ENCODE measurements at regions of chr7 and their contacts with region 1.

Region 1: DNA sequence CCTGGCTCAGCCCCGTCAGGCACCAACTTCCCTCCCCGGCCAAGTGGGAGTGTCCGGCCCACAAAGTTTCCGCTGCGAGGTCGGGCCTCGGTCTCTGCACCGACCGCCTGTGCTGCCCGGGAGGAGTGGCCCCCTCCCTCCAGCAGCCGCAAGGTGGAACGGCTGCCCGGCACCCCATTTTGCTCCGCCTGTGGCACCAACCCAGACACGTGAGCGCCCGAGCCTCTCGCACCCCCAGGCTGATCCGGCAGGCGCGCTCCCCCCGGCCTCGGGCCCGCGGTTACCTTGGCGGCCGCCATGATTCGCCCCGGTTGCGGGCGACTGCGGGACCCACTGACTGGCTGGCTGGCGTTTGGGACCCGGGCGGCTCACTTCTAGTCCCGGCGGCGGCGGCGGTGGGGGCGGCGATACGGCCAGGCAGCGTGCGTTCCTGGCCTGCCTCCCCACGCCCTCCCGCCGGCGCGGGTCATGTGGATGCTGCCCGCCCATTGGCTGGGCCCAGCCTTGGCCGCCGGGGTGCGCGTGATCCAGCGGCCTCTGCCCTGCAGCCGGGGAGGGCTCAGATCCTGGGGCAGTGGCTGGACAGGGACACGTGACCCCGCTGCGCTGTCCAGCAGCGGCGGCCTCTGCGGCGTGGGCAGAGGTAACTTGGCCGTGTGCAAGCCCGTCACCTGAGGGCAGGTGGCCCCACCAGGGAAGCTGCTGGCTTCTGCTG is at the start of gene SLC25A13:
- DNase-seq: peak; percentile 25 to 82 (median 48)
- ATAC-seq: peak; percentile 82
- H3K4me3 ChIP-seq: peak within 1 kb of the TSS; percentile 91
- H3K4me3 Mint-ChIP-seq: peak within 1 kb of the TSS; percentile 97
- H3K27ac ChIP-seq: peak within 1 kb of the TSS; percentile 63 to 87
- H3K27ac Mint-ChIP-seq: peak within 1 kb of the TSS; percentile 96
- H3K4me1 ChIP-seq: peaks cover 13% of the 10 kb centered on the region
- H3K4me1 Mint-ChIP-seq: peaks cover 32% of the 10 kb centered on the region
- H3K27me3 ChIP-seq: no peaks in the 10 kb centered on the region
- H3K27me3 Mint-ChIP-seq: no peaks in the 10 kb centered on the region
- CTCF ChIP-seq: no peak
- total RNA-seq, gene SLC25A13: 12.7 to 13.5 TPM

Region 2: DNA sequence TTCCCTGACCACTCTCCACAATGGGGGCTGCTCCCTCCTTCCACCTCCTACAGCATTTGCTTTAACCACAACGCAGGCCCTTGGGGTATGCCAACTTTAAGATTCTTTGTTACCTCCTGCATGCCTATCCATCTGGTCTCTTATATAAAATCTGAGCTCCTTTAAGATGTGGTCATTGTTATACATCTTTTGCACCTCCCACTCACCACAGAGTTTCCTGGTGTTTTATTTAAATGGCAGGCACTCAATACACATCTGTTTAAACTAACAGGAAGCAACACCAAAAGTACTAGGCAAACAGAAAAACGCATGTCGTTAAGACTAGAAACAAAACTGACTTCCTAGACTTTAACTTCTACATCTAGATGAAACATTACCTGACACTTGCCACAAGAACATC is 36.2 kb before region 1 on chr7:
- CTCF ChIA-PET with region 1: no interaction called
- POLR2A ChIA-PET with region 1: interaction called, 6 read pairs
- intact Hi-C with region 1: loop called in 1 of 2 experiments (anchors 5 kb)
- DNase-seq: peak in 7 of 14 experiments; percentile 9 to 89 (median 28)
- ATAC-seq: peak; percentile 95
- H3K4me3 ChIP-seq: peak overlapping the region; percentile 13
- H3K4me3 Mint-ChIP-seq: peak overlapping the region; percentile 43
- H3K27ac ChIP-seq: peak overlapping the region; percentile 26 to 77
- H3K27ac Mint-ChIP-seq: peak overlapping the region; percentile 84
- H3K4me1 ChIP-seq: peaks cover 30% of the 10 kb centered on the region
- H3K4me1 Mint-ChIP-seq: peaks cover 53% of the 10 kb centered on the region
- H3K27me3 ChIP-seq: no peaks in the 10 kb centered on the region
- H3K27me3 Mint-ChIP-seq: no peaks in the 10 kb centered on the region
- CTCF ChIP-seq: no peak

Region 3: GRCh38 chr7:96709381-96710228 is 387.8 kb after region 1 on chr7 and contains the start of gene SEM1:
- CTCF ChIA-PET with region 1: no interaction called
- POLR2A ChIA-PET with region 1: no interaction called
- intact Hi-C with region 1: loop called in 1 of 2 experiments (anchors 10 kb)
- DNase-seq: peak; percentile 36 to 82 (median 54)
- ATAC-seq: peak; percentile 75
- H3K4me3 ChIP-seq: peak within 1 kb of the TSS; percentile 97
- H3K4me3 Mint-ChIP-seq: peak within 1 kb of the TSS; percentile 97
- H3K27ac ChIP-seq: peak within 1 kb of the TSS in 1 of 2 donors; percentile 88
- H3K27ac Mint-ChIP-seq: peak within 1 kb of the TSS; percentile 91
- H3K4me1 ChIP-seq: peaks cover 9% of the 10 kb centered on the region
- H3K4me1 Mint-ChIP-seq: peaks cover 49% of the 10 kb centered on the region
- H3K27me3 ChIP-seq: no peaks in the 10 kb centered on the region
- H3K27me3 Mint-ChIP-seq: peaks cover 8% of the 10 kb centered on the region
- CTCF ChIP-seq: no peak
- total RNA-seq, gene SEM1: 17.4 to 18.2 TPM

Region 4: DNA sequence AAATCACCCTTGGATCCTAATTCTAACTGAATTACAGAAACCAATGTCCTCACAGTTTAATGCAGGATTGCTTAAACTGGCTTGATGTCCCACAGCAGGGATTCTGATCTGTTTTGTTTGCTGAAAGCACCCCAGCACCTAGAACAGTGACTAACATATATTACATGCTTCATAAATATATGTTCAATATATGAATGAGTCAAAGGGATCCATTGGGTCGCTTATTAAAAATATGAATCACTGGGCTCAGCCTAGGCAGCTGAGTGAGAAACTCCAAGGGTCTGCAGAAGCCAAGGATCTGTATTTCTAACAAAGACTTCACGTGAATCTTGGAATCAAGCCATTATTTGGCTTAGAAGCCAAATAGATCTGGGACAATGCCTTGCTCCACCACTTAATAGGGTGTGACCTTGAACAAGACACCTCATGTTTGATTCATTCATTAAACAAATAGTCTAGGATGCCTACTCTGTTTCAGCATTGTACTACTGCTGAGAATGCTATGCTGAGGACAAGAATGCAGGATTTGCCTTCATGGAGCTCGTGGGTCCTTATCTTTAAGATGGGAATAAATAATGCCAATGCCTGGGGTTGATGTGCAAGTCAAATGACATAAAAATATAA is 580.1 kb after region 1 on chr7:
- CTCF ChIA-PET with region 1: no interaction called
- POLR2A ChIA-PET with region 1: no interaction called
- intact Hi-C with region 1: no loop called
- DNase-seq: no peak
- ATAC-seq: no peak
- H3K4me3 ChIP-seq: no peak overlapping the region
- H3K4me3 Mint-ChIP-seq: no peak overlapping the region
- H3K27ac ChIP-seq: no peak overlapping the region
- H3K27ac Mint-ChIP-seq: no peak overlapping the region
- H3K4me1 ChIP-seq: no peaks in the 10 kb centered on the region
- H3K4me1 Mint-ChIP-seq: no peaks in the 10 kb centered on the region
- H3K27me3 ChIP-seq: peaks cover 0 to 5% of the 10 kb centered on the region in 2 experiments
- H3K27me3 Mint-ChIP-seq: peaks cover 10% of the 10 kb centered on the region
- CTCF ChIP-seq: no peak

Measured in CD4-positive, alpha-beta T cell (primary cell).